Calu3 (cell line): ENCODE measurements at regions of chr16 and their contacts with region 1.

Region 1: DNA sequence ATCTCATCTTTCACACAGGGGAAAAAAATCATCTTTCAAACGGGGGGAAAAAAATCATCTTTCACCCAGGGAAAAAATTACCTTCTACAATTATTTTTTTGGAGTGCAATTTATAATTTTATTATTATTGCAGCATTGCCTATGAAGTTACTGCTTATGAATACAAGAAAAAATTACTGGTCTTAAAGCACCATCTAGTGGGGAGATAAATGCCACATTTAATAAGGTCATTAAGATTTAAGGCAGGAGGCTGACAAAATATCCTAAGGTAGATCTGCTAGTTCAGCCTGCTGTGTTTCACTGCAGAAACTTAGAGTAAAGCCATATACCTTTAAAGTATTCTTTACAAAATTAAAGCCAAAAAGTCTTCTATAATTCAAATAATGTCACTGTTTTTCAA is 13.7 kb downstream of the SHCBP1 start:
- DNase-seq: no peak
- H3K4me3 Mint-ChIP-seq: no peak overlapping the region
- H3K27ac Mint-ChIP-seq: no peak overlapping the region
- H3K4me1 Mint-ChIP-seq: no peaks in the 10 kb centered on the region
- H3K27me3 Mint-ChIP-seq: no peaks in the 10 kb centered on the region
- CTCF ChIP-seq: no peak

Region 2: DNA sequence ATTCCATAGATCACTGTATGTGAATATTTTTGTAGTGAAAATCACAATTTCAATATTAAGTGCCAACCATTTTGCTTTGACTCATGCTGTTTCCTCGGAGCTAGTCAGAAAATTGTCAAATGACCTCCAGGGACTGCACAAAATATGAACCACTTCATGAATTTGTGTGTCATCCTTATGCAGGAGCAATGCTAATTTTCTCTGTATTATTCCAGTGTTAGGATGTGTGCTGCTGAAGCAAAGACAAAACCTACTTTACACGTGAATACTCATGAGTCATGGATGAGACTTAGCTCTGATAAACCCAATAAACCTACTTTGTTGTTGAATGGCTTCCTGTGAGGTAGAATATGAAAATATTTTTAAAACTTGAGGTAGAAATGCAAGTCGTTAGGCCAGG is 51.6 kb before region 1 on chr16:
- CTCF ChIA-PET with region 1: interaction called, 6 read pairs
- intact Hi-C with region 1: loop called (anchors 1 kb)
- DNase-seq: no peak
- H3K4me3 Mint-ChIP-seq: no peak overlapping the region
- H3K27ac Mint-ChIP-seq: no peak overlapping the region
- H3K4me1 Mint-ChIP-seq: peaks cover 6% of the 10 kb centered on the region
- H3K27me3 Mint-ChIP-seq: peaks cover under 1% of the 10 kb centered on the region
- CTCF ChIP-seq: no peak

Region 3: DNA sequence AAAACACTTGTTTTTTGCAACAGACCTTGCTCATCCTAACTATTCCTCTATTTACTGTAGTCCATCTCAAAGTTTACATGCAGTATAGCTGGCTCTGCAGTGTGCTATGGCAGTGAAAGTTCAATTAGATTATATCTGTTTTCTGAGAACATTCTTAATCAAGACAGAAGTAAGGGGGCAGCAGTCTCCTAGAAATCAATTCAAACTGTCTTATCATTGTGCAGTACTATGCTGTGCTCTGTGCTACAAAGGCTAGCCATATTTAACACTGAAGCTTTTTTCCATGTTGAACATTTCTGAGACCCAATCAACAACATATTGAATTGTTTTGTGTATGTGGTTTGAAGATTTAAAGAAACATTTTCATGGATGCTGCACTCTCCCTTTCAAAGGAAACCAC is 524.8 kb after region 1 on chr16:
- CTCF ChIA-PET with region 1: no interaction called
- intact Hi-C with region 1: no loop called
- DNase-seq: no peak
- H3K4me3 Mint-ChIP-seq: no peak overlapping the region
- H3K27ac Mint-ChIP-seq: no peak overlapping the region
- H3K4me1 Mint-ChIP-seq: peaks cover 33% of the 10 kb centered on the region
- H3K27me3 Mint-ChIP-seq: no peaks in the 10 kb centered on the region
- CTCF ChIP-seq: no peak